ENCODE measurements at regions of chr10 and their contacts with region 1.

Region 1: DNA sequence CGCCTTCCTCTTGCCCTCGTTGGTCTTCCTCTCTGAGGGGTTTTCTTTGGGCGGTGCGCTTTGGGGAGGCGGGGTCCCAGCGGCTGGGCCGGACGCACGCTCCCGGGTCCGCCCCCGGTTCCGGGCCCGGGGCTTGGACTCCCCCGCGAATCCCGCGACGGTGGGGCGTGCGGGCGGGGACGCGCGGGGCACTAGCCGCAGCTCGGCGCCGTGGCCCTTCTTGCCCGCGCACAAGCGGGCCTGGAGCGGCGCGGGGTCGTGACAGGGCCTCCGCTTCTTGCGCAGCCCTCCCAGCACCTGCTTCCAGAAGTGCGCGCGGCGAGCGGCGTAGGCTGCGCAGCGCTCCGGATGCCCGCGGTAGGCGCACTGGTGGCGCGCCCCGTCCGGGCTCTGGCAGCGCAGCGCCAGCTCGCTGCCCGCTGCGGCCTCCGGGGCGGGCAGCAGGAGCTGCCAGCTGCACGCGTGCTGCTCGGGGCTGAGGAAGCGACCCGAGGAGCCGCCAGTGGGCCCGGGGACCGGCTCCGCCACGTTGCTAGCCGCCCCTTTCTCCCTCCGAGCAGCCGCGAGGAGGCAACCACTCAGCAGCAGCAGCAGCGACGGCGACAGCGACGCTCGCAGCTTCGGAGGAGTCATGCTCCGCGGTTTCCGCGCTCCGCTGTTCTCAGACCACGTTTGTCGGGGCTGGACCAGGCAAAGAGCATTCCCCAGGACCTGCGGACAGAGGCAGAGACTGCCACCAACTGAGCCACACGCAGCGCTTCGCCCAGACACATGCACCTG is 759 bp downstream of the FGFBP3 start:
- DNase-seq: peak; percentile 92
- H3K4me3 Mint-ChIP-seq: peak overlapping the region; percentile 95
- H3K27ac Mint-ChIP-seq: peak overlapping the region; percentile 88
- H3K4me1 Mint-ChIP-seq: peaks cover 15% of the 10 kb centered on the region
- H3K27me3 Mint-ChIP-seq: peaks cover 11% of the 10 kb centered on the region

Region 2: GRCh38 chr10:91298224-91298871 is 610.2 kb before region 1 on chr10:
- intact Hi-C with region 1: loop called (anchors 1 kb)
- DNase-seq: peak; percentile 93
- H3K4me3 Mint-ChIP-seq: peak overlapping the region; percentile 71
- H3K27ac Mint-ChIP-seq: no peak overlapping the region
- H3K4me1 Mint-ChIP-seq: peaks cover 8% of the 10 kb centered on the region
- H3K27me3 Mint-ChIP-seq: peaks cover 22% of the 10 kb centered on the region

Region 3: GRCh38 chr10:91632671-91633550 is 275.6 kb before region 1 on chr10 and contains the start of gene PPP1R3C:
- intact Hi-C with region 1: loop called (anchors 2 kb)
- DNase-seq: peak; percentile 85
- H3K4me3 Mint-ChIP-seq: peak within 1 kb of the TSS; percentile 77
- H3K27ac Mint-ChIP-seq: no peak within 1 kb of the TSS
- H3K4me1 Mint-ChIP-seq: peaks cover 5% of the 10 kb centered on the region
- H3K27me3 Mint-ChIP-seq: peaks cover 54% of the 10 kb centered on the region
- total RNA-seq, gene PPP1R3C: 0.14 and 0.21 TPM in 2 replicates

Region 4: GRCh38 chr10:91797874-91798648 is 110.5 kb before region 1 on chr10 and contains the start of gene TNKS2:
- intact Hi-C with region 1: loop called (anchors 2 kb)
- DNase-seq: peak; percentile 99
- H3K4me3 Mint-ChIP-seq: peak within 1 kb of the TSS; percentile 96
- H3K27ac Mint-ChIP-seq: peak within 1 kb of the TSS; percentile 98
- H3K4me1 Mint-ChIP-seq: peaks cover 51% of the 10 kb centered on the region
- H3K27me3 Mint-ChIP-seq: no peaks in the 10 kb centered on the region
- total RNA-seq, gene TNKS2: 27.5 and 28.8 TPM in 2 replicates

Region 5: DNA sequence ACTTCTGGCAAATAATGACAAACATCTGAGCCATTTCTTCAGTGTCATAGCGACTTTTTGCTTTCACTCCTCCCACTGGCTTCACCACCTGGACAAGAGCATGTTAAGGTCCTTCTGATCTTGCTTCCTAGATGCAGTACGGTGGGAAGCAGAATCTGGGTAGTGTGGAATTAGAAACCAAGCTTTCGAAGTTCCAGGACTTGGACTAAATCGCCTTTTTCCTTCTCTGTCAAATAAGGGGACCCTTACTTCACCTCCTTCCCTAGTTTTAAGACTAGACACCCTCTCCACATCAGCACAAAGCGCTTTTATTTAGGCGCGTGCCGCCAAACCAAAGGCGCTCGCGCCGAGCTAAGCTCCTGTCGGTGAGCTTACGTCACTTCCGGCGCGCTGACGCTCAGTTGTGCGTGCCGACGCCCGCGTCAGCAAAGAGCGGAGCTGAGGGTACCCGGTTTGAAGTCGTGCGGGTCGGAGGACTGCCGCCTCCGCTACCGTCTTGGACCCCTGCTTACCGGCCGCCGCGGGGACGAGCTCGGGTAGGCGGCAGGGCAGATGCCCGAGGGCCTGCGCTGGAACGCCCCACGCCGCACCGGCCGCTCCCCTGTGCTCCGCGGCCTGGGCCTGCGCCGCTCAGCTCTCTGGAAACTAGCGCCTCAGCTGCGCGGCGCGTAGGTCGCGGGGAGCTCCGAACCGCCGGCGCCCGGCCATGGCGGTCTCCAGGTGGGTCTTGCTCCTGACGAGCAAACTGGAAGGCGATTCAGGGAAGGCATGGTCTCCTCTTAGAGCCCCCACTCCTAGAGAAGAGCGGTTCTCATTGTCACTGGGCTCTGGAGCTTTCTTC is 15.1 kb after region 1 on chr10 and contains the start of gene BTAF1:
- intact Hi-C with region 1: loop called (anchors 1 kb)
- DNase-seq: peak; percentile 97
- H3K4me3 Mint-ChIP-seq: peak within 1 kb of the TSS; percentile 87
- H3K27ac Mint-ChIP-seq: peak within 1 kb of the TSS; percentile 99
- H3K4me1 Mint-ChIP-seq: peaks cover 28% of the 10 kb centered on the region
- H3K27me3 Mint-ChIP-seq: peaks cover 2% of the 10 kb centered on the region
- total RNA-seq, gene BTAF1: 63.9 and 67.1 TPM in 2 replicates

Region 6: GRCh38 chr10:92131271-92131820 is 222.8 kb after region 1 on chr10:
- intact Hi-C with region 1: no loop called
- DNase-seq: no peak
- H3K4me3 Mint-ChIP-seq: no peak overlapping the region
- H3K27ac Mint-ChIP-seq: no peak overlapping the region
- H3K4me1 Mint-ChIP-seq: no peaks in the 10 kb centered on the region
- H3K27me3 Mint-ChIP-seq: no peaks in the 10 kb centered on the region

Measured in activated CD4-positive, alpha-beta T cell treated with anti-CD3 and anti-CD28 coated beads, Interleukin-2, amount 10 ng/mL, durations not matched to agents 24 days and 14 days (primary cell).